ENCODE measurements at regions of chr5 and their contacts with region 1.

Region 1: DNA sequence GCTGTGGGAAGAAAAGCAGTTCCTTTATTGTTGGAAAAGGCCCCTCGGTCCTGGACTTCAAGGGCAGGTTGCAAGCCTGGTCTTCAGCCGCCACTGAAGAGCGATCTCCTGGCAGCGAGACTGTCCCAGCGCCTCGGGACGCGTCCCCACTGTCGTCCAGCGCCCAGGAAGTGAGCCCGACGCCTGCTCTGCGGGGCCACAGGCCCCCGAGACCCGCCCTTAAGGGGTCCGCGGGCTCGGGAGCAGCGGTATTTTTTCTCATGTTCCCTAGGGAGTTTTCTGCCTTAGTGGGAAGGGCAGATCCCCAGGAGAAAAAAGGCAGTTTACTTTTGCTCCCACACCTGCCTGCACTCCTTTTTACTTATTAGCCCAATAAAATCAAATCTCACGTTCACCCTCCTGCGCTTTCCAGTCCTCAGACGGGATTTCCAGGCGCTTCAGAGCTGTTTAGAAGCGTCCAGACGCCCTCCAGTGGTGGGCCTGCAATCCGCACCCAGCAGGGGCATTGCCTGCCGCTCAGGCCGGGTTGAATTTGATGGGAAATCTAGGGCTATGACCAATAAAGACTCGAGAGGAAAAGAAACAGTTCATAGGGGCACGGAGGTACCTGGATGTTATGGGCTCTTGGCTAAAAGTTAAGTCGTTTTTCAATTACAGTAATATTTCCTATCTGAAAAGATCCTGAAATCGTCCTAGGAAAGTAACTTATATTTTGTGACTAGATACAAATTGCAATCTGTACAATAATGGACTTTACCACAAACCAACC is 2.8 kb upstream of the EFNA5 start:
- DNase-seq: peak; percentile 92
- H3K4me3 ChIP-seq: peak overlapping the region; percentile 47 to 68 (median 66)
- H3K27ac ChIP-seq: peak overlapping the region; percentile 59 to 79 (median 74)
- H3K4me1 ChIP-seq: peaks cover 0 to 30% (median 23%) of the 10 kb centered on the region in 4 donors
- H3K27me3 ChIP-seq: peaks cover 0 to 23% (median 0%) of the 10 kb centered on the region in 3 donors
- CTCF ChIP-seq: peak; percentile 84 to 95 (median 92)
- EP300 ChIP-seq: no peak
- POLR2A ChIP-seq: no peak

Region 2: DNA sequence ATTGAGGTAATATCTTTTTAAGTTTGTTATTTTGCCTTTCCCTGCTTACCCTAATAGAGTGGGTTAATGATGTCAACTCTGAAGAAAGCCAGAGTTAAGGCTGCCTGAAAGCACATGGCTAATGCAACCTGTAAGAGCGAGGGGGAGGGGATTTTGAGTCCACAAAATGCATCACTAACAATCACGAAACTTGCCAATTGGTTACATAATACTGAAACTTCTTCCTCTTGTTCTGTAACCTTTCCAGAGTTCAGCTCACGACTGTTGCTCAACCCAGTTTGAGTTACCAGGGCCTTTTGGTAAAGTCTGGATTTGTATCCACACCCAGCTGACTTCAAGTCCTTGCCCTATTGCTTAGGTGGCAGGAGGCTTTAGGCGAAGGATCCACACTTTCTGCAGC is 311.6 kb before region 1 on chr5:
- intact Hi-C with region 1: loop called (anchors 5 kb)
- DNase-seq: peak; percentile 77
- H3K4me3 ChIP-seq: no peak overlapping the region
- H3K27ac ChIP-seq: no peak overlapping the region
- H3K4me1 ChIP-seq: peaks cover 0 to 8% (median 0%) of the 10 kb centered on the region in 4 donors
- H3K27me3 ChIP-seq: no peaks in the 10 kb centered on the region
- CTCF ChIP-seq: no peak
- EP300 ChIP-seq: peak in 1 of 4 donors; percentile 39
- POLR2A ChIP-seq: no peak

Region 3: GRCh38 chr5:107418071-107418470 is 255.5 kb before region 1 on chr5:
- intact Hi-C with region 1: loop called (anchors 10 kb)
- DNase-seq: no peak
- H3K4me3 ChIP-seq: no peak overlapping the region
- H3K27ac ChIP-seq: no peak overlapping the region
- H3K4me1 ChIP-seq: peaks cover 0 to 13% (median 10%) of the 10 kb centered on the region in 4 donors
- H3K27me3 ChIP-seq: no peaks in the 10 kb centered on the region
- CTCF ChIP-seq: no peak
- EP300 ChIP-seq: no peak
- POLR2A ChIP-seq: no peak

Region 4: DNA sequence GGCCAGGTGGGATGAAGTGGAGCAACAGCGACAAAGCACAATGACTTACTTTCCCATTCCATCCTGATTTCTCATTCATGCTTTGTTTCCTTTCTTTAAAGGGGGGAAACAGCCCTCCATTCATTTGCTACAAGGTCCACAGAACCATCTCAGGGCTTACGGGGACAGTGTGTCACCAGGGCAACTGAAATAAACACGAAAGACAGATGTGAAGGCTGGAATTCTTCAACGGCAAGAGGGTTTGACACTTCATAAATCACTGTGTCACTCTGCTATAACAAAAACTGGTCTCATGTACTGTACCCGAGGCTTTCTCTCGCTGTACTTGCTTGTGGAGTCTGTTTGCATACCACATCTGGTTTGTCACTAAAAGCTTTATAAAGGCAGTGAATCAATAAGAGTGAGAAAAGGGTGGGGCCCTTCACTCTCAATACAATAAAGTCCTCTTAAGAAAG is 153.6 kb before region 1 on chr5:
- intact Hi-C with region 1: no loop called
- DNase-seq: no peak
- H3K4me3 ChIP-seq: no peak overlapping the region
- H3K27ac ChIP-seq: peak overlapping the region in 1 of 4 donors; percentile 19
- H3K4me1 ChIP-seq: peaks cover 0 to 11% (median 5%) of the 10 kb centered on the region in 4 donors
- H3K27me3 ChIP-seq: no peaks in the 10 kb centered on the region
- CTCF ChIP-seq: no peak
- EP300 ChIP-seq: peak in 1 of 4 donors; percentile 16
- POLR2A ChIP-seq: no peak

Region 5: DNA sequence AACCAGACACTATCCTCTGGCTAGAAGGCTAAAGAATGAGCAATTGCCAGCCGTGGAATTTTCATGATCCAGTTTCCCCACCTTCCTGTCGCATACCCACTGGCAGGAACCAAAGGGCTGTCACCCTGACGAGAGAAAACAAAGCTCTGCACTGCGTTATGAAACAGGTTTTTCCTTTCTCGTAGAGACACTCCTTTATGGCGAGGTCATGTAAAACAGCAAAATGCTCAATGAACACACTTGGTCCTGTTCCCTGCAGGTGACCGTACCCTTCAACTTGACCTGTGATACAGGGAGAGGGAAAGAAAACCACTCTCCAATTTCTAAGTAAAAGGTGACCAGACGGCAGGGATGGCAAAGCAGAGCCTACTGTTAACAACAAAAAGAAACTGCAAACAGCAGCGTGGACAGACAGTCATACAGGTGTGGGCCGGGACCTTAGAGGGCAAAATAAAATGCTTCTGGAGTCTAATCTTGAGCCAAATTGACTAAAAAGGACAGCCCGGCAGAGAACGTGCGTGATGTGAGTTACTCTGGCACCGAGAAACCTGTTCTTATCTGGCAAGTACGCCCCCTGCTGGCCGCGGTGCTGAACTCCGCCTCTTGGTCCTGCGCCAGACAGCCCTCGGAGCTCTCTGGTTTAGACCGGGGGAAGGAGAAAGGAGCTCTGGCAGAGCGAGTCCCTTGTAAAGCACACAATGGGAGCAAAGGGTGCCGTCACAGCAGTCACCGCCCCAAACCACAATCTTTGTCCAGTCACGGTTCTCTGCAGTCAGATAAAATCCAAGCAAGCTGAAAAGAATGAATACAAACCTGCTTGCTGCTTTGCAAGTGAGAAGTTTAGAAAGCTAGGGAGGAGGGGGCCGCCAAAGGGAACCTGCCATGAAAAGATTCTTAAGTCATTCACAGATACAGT is 101.7 kb before region 1 on chr5:
- intact Hi-C with region 1: loop called (anchors 5 kb)
- DNase-seq: peak; percentile 96
- H3K4me3 ChIP-seq: peak overlapping the region; percentile 34 to 52 (median 49)
- H3K27ac ChIP-seq: peak overlapping the region; percentile 57 to 70 (median 64)
- H3K4me1 ChIP-seq: peaks cover 0 to 14% (median 11%) of the 10 kb centered on the region in 4 donors
- H3K27me3 ChIP-seq: no peaks in the 10 kb centered on the region
- CTCF ChIP-seq: peak; percentile 74 to 93 (median 88)
- EP300 ChIP-seq: no peak
- POLR2A ChIP-seq: peak in 1 of 2 donors; percentile 15